ENCODE measurements at regions of chr22 and their contacts with region 1.

Region 1: DNA sequence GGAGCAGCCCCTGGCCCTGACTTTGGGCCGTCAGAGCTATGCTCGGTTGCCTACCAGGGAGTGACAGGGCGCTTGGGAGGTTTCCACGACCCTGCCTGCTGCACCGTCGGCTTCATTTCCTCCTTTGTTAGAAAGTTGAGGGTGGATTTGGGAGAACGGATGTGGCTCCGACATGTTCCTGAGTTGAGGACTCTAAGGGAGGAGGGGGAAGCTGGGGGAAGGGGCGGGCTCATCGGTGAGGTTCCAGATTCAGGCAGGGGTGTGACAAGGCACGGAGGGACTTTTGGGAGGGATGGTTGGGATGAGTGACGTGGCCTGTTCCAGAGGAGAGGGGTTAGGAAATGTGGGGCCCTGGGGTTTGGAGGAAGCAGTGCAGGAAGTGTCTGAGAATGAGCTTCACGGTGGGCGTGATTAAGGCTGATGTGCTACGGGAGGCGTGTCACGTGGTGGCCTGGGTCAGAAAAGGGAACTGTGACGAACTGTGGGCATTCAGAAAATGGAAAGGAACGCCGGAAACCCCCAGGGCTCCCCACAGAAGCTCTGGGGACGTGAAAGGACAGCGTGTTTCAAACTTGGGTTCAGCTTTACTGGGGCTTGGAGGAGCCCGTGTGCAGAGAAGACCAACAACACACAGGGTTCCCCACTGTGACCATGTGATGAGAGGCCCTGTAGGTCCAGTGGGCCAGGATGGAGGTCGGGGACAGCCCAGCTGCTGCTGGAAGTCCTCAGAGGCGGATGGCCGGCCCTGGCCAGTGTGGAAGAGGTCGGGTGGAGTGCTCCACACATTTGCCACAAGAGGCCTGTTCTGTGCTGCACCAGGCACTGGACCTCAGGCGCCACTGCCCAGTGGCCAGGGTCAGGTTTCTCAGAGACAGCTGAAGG is 2.8 kb downstream of the PARVB start:
- DNase-seq: peak; percentile 85 to 90 (median 87)
- ATAC-seq: peak; percentile 65 to 85 (median 72)
- H3K4me3 ChIP-seq: peak overlapping the region in 10 of 12 donors; percentile 54 to 92 (median 76)
- H3K27ac ChIP-seq: peak overlapping the region; percentile 86 to 99 (median 97)
- H3K4me1 ChIP-seq: peaks cover 20 to 95% (median 58%) of the 10 kb centered on the region in 12 donors
- H3K27me3 ChIP-seq: no peaks in the 10 kb centered on the region
- CTCF ChIP-seq: no peak
- POLR2A ChIP-seq: no peak

Region 2: DNA sequence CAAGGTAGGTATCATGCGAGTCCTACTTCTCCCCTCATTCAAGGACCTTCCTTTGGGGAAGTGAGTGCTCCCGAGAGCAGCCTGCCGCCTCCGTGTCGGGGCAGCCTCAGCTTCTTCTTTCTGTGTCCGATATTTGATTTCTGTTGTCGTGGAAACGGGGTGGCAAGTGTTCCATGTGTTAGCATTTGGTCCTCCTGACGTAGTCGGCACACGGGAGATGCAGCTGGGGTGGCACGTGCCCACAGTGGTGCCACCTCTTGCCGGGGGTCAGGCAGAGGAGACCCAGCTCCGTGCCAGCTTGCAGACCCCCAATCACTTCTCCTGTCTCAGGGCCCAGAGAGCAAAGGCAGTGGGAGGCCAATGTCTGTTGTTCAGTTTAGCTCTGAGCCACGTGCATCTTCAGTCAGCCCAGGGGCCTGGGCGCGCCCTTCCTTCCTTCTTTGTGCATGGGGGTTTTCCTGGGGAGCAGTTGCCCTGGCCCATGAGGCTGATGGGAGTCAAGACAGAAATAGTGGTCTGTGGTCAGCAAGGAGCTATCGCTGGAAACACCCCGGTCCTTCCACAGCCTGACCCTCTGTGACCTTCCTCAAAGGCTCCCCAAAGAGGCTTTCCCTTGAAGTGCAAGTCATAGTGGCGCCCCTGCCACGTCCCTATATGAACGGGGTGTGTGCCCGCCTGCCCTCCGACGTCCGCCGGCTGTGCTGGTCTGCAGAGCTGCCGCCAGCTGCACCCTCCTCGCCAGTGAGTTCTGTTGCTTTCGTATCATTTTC is 41.7 kb after region 1 on chr22:
- intact Hi-C with region 1: loop called in 2 of 10 experiments (anchors 5 kb)
- DNase-seq: peak in 2 of 5 donors; percentile 39 to 62
- ATAC-seq: peak; percentile 25 to 64 (median 53)
- H3K4me3 ChIP-seq: no peak overlapping the region
- H3K27ac ChIP-seq: peak overlapping the region in 11 of 12 donors; percentile 13 to 66 (median 52)
- H3K4me1 ChIP-seq: peaks cover 0 to 47% (median 21%) of the 10 kb centered on the region in 12 donors
- H3K27me3 ChIP-seq: no peaks in the 10 kb centered on the region
- CTCF ChIP-seq: no peak
- POLR2A ChIP-seq: no peak

Region 3: DNA sequence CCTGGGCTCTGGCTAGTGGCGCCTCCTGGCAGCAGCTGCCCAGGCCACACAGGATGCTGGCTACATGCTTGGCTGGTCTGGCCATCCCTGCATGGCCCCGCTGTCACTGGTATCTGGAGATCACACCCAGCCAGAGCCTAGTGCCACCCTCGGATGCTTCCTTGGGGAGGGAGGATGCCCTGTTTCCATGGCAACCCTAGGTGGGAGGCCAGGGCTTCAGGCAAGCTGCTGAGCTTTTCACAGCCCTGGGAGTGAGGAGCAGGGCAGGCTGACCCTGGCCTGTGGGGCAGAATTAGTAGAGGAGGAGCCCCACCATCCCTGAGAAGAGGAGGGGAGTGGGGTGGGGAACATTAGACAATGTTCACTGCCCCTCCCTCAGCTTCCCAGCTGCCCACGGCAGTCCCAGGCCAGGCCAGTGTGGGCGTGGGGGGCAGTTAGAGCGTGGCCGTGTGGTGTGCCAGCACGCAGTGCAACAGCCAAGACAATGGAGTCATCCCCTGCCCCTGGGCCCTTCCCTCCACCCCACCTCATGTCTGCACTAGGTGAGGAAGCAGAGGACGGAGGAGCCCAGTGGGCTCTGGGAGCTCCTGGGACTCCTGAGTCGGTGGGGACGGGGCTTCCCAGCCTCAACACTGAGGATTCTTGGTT is 47.6 kb after region 1 on chr22:
- intact Hi-C with region 1: loop called in 3 of 10 experiments (anchors 2 to 5 kb)
- DNase-seq: no peak
- ATAC-seq: no peak
- H3K4me3 ChIP-seq: no peak overlapping the region
- H3K27ac ChIP-seq: no peak overlapping the region
- H3K4me1 ChIP-seq: peaks cover 0 to 48% (median 1%) of the 10 kb centered on the region in 12 donors
- H3K27me3 ChIP-seq: no peaks in the 10 kb centered on the region
- CTCF ChIP-seq: no peak
- POLR2A ChIP-seq: no peak

Region 4: GRCh38 chr22:44242946-44243724 is 216.3 kb after region 1 on chr22:
- intact Hi-C with region 1: no loop called
- DNase-seq: no peak
- ATAC-seq: no peak
- H3K4me3 ChIP-seq: no peak overlapping the region
- H3K27ac ChIP-seq: no peak overlapping the region
- H3K4me1 ChIP-seq: no peaks in the 10 kb centered on the region
- H3K27me3 ChIP-seq: peaks cover 0 to 4% (median 0%) of the 10 kb centered on the region in 9 donors
- CTCF ChIP-seq: no peak
- POLR2A ChIP-seq: no peak

Region 5: DNA sequence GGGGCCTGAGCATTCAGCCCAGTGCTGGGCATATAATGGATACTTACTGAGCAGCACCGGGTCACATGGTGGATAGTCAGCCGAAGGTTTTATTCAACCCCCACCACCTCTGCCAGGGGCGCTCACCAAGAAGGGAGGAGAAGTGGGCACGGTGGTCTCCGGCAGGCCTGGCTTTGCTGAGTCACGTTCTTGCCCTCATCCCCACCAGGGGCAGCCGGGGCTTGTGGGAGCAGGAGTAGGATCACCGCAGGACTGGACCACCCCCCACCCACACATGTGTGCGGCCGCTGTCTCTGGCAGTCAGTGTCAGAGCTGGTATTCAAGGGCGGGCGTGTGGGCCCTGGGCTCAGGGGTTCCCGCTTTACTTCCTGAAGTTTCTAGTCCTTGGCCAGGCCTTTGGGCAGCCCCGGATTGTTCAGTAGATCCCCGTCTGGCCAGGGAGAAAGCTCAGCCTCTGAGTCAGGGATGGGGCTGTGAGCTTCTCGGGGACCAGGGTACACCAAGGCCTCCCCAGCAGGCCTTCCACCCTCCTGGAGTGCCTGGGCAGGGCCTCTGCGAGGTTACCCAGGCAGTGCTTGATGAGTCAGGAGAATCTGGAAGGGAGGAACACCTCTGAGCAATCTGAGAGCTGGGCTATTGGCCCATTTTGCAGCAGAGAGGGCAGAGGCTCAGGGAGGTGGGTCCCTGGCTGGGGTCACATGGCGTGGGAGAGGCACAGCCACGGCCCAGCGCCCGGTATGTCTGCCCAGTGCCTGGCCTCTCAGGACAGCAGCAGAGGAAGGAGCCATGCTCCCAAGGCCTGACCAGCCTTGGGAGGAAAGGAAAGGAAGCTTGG is 410.6 kb after region 1 on chr22:
- intact Hi-C with region 1: no loop called
- DNase-seq: peak in 1 of 5 donors; percentile 14
- ATAC-seq: no peak
- H3K4me3 ChIP-seq: no peak overlapping the region
- H3K27ac ChIP-seq: no peak overlapping the region
- H3K4me1 ChIP-seq: no peaks in the 10 kb centered on the region
- H3K27me3 ChIP-seq: no peaks in the 10 kb centered on the region
- CTCF ChIP-seq: no peak
- POLR2A ChIP-seq: no peak

Measured in heart left ventricle (tissue), 16 donors.